PC-3 (cell line): ENCODE measurements at regions of chr14 and their contacts with region 1.

Region 1: DNA sequence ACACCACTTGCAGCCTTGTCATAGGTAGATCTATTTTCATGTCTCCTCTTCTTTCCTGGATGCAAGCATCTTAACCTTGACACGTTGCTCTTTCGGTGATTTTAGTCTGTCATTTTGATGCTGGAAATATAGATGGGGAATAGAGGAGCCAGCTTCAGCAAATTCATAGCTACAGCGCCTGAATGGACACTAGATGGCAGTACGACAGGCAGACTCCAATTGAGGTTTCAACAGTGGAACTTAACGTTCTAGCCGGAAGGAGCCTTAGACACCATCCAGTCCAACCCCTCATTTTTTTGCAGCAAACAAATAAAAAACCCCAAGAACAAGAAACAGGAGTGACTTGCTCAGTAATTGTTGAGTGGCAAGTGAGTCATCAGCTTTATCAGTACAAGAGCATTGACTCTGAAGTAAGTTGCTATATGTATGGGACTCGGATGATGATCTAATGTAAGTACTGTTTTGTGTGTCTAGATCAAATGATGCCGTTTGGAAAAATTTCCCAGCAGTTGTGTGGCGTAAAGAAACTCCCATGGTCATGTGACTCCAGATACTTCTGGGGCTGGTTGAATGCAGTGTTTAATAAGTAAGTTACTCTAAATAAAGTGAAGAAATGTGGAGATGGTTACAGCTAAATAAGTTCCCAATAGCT is 9.0 kb downstream of the DMAC2L start:
- DNase-seq: peak; percentile 97
- ATAC-seq: peak; percentile 96
- H3K4me3 ChIP-seq: peak overlapping the region; percentile 25; the same call in 1 of the 2 replicates
- H3K27ac ChIP-seq: peak overlapping the region; percentile 87
- H3K4me1 ChIP-seq: peaks cover 22% of the 10 kb centered on the region
- H3K27me3 ChIP-seq: no peaks in the 10 kb centered on the region
- CTCF ChIP-seq: peak; percentile 98

Region 2: GRCh38 chr14:48710133-48710532 is 1611.0 kb before region 1 on chr14:
- CTCF ChIA-PET with region 1: no interaction called
- POLR2A ChIA-PET with region 1: no interaction called
- intact Hi-C with region 1: no loop called
- DNase-seq: no peak
- ATAC-seq: no peak
- H3K4me3 ChIP-seq: no peak overlapping the region
- H3K27ac ChIP-seq: no peak overlapping the region
- H3K4me1 ChIP-seq: no peaks in the 10 kb centered on the region
- H3K27me3 ChIP-seq: peaks cover 4% of the 10 kb centered on the region; the same call in 1 of the 2 replicates
- CTCF ChIP-seq: no peak

Region 3: GRCh38 chr14:50303744-50304471 is 17.2 kb before region 1 on chr14:
- CTCF ChIA-PET with region 1: no interaction called
- POLR2A ChIA-PET with region 1: no interaction called
- intact Hi-C with region 1: no loop called
- DNase-seq: no peak
- ATAC-seq: no peak
- H3K4me3 ChIP-seq: no peak overlapping the region
- H3K27ac ChIP-seq: no peak overlapping the region
- H3K4me1 ChIP-seq: peaks cover 9% of the 10 kb centered on the region
- H3K27me3 ChIP-seq: no peaks in the 10 kb centered on the region
- CTCF ChIP-seq: no peak

Region 4: DNA sequence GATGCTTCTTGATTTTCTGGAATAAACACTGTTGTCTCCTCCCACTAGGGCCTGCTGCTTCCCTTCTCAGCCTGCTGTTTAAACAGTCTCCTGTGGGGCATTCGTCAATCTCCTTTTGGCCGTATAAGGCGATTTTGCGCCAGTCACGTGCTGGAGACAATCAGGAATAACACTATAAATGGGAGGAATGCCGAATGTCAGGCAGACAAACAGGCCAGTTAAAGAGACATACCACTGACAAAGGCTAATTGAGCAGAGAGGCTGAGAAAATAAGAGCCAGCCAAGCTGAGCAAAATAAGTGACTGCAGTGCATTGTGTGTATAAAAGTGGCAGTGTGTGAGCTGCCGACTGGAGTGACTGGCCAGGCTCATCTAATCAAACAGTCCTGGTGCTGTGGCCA is 14.3 kb after region 1 on chr14:
- CTCF ChIA-PET with region 1: interaction called, 14 read pairs
- POLR2A ChIA-PET with region 1: interaction called, 3 read pairs
- intact Hi-C with region 1: no loop called
- DNase-seq: no peak
- ATAC-seq: no peak; the same call in 1 of the 2 replicates
- H3K4me3 ChIP-seq: no peak overlapping the region
- H3K27ac ChIP-seq: no peak overlapping the region
- H3K4me1 ChIP-seq: peaks cover 12% of the 10 kb centered on the region
- H3K27me3 ChIP-seq: no peaks in the 10 kb centered on the region
- CTCF ChIP-seq: no peak

Region 5: DNA sequence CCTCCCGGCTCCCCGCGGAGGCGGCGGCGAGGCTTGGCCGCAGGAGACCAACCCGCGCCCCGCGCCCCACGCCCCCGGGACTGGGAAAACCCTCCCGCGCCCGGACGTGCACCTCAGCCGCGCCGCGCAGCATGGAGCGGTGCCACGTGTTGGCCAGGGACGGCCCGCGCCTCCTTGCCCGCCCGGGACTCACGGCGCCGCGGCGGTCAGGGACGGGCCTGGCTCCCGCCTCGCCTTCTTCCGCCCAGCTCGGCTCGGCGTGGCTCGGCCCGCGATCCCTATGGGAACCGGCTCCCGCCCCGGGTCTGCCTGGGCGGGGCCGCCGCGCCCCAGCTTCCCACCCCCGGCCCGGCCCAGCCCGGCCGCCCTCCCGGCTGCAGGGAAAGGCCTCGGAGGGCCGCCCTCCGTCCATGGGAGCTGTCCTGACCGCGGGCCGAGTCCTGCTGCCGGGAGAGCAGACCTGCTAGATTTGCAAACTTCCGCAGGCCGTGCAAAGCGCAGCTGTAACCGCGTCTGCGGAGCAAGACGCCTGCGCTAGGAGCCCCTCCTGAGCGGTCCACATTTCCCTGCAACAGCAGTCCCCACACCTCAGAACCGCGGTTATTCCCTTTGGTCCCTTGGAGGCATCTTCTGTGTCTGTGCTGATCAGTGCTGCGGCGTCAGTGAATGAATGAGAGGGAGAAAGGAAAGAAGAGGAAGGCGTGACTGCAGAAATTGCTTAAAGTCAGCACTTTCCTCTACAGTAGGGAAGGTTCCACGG is 75.7 kb after region 1 on chr14 and contains the start of gene CDKL1:
- CTCF ChIA-PET with region 1: interaction called, 5 read pairs
- POLR2A ChIA-PET with region 1: interaction called, 3 read pairs
- intact Hi-C with region 1: loop called (anchors 1 kb)
- DNase-seq: peak; percentile 85
- ATAC-seq: peak; percentile 82
- H3K4me3 ChIP-seq: peak within 1 kb of the TSS; percentile 82
- H3K27ac ChIP-seq: peak within 1 kb of the TSS; percentile 85
- H3K4me1 ChIP-seq: peaks cover 34% of the 10 kb centered on the region
- H3K27me3 ChIP-seq: no peaks in the 10 kb centered on the region
- CTCF ChIP-seq: no peak
- total RNA-seq, gene CDKL1: 7.1 and 14.4 TPM in 2 replicates

Region 6: GRCh38 chr14:50778721-50779483 is 457.8 kb after region 1 on chr14:
- CTCF ChIA-PET with region 1: interaction called, 4 read pairs
- POLR2A ChIA-PET with region 1: no interaction called
- intact Hi-C with region 1: loop called (anchors 2 kb)
- DNase-seq: no peak
- ATAC-seq: peak; percentile 6; the same call in 1 of the 2 replicates
- H3K4me3 ChIP-seq: no peak overlapping the region
- H3K27ac ChIP-seq: no peak overlapping the region
- H3K4me1 ChIP-seq: peaks cover 37% of the 10 kb centered on the region
- H3K27me3 ChIP-seq: no peaks in the 10 kb centered on the region
- CTCF ChIP-seq: no peak